OCI-LY7 (cell line): ENCODE measurements at regions of chr6 and their contacts with region 1.

Region 1: GRCh38 chr6:2196079-2196679 is 49.2 kb downstream of the GMDS start:
- DNase-seq: peak; percentile 60
- H3K4me3 ChIP-seq: no peak overlapping the region
- H3K27ac ChIP-seq: no peak overlapping the region
- H3K4me1 ChIP-seq: no peaks in the 10 kb centered on the region
- CTCF ChIP-seq: peak; percentile 89

Region 2: GRCh38 chr6:391559-392440 is 1804.4 kb before region 1 on chr6 and contains the start of gene IRF4:
- CTCF ChIA-PET with region 1: no interaction called
- POLR2A ChIA-PET with region 1: no interaction called
- intact Hi-C with region 1: no loop called
- DNase-seq: peak; percentile 84
- H3K4me3 ChIP-seq: peak within 1 kb of the TSS; percentile 98
- H3K27ac ChIP-seq: peak within 1 kb of the TSS; percentile 57
- H3K4me1 ChIP-seq: peaks cover 49% of the 10 kb centered on the region
- CTCF ChIP-seq: no peak
- total RNA-seq, gene IRF4: 143 and 189 TPM in 2 replicates

Region 3: DNA sequence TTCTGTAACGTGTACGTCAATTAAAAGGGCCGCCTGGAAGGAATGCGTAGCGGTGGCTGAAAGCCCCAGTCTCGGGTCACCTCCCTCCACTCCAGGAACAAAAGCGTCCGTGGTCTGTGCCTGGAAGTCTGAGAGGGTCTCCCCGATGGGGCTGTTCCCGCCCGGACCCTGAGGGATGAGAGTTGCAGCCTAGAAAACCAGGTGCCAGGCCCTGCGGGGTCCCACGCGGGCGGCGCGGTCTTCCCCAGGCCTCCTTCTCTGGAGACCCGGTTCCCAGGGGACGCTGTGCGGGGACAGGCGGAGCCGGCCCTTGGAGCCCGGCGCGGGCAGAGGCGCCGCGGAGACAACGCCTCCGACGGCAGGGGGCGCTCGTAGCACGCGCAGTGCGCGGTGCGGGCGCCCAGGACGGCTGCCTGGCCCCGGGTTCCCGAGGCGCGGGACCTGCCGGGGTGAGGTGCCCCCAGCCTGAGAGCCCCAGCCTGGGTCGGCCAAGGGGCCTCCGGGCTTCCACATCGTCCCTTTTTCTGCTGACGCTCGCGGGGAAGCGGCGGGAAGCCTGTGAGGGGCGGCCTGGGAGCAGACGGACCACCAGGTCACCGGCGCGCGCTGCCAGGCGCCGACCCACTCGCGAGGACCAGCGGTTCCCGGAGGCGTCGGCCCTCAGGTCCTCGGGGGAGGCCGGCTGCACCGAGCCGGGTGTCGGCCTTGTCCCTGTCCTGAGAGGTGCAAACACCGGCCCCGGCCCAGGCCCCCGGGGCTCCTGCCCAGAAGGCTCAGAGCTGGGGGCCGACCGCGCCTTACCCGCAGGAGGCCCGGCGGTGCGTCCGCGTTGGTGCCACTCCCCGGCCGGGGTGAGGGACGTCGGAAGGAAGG is 591.8 kb before region 1 on chr6:
- CTCF ChIA-PET with region 1: no interaction called
- POLR2A ChIA-PET with region 1: no interaction called
- intact Hi-C with region 1: loop called (anchors 2 kb)
- DNase-seq: peak; percentile 57
- H3K4me3 ChIP-seq: no peak overlapping the region
- H3K27ac ChIP-seq: no peak overlapping the region
- H3K4me1 ChIP-seq: no peaks in the 10 kb centered on the region
- CTCF ChIP-seq: peak; percentile 81

Region 4: GRCh38 chr6:2008383-2008976 is 187.7 kb before region 1 on chr6:
- CTCF ChIA-PET with region 1: no interaction called
- POLR2A ChIA-PET with region 1: no interaction called
- intact Hi-C with region 1: loop called (anchors 10 kb)
- DNase-seq: no peak
- H3K4me3 ChIP-seq: no peak overlapping the region
- H3K27ac ChIP-seq: no peak overlapping the region
- H3K4me1 ChIP-seq: no peaks in the 10 kb centered on the region
- CTCF ChIP-seq: no peak

Region 5: GRCh38 chr6:2181567-2181966 is 14.6 kb before region 1 on chr6:
- CTCF ChIA-PET with region 1: no interaction called
- POLR2A ChIA-PET with region 1: no interaction called
- intact Hi-C with region 1: no loop called
- DNase-seq: no peak
- H3K4me3 ChIP-seq: no peak overlapping the region
- H3K27ac ChIP-seq: no peak overlapping the region
- H3K4me1 ChIP-seq: no peaks in the 10 kb centered on the region
- CTCF ChIP-seq: no peak